GM12878 (cell line): ENCODE measurements at regions of chr19 and their contacts with region 1.

Region 1: DNA sequence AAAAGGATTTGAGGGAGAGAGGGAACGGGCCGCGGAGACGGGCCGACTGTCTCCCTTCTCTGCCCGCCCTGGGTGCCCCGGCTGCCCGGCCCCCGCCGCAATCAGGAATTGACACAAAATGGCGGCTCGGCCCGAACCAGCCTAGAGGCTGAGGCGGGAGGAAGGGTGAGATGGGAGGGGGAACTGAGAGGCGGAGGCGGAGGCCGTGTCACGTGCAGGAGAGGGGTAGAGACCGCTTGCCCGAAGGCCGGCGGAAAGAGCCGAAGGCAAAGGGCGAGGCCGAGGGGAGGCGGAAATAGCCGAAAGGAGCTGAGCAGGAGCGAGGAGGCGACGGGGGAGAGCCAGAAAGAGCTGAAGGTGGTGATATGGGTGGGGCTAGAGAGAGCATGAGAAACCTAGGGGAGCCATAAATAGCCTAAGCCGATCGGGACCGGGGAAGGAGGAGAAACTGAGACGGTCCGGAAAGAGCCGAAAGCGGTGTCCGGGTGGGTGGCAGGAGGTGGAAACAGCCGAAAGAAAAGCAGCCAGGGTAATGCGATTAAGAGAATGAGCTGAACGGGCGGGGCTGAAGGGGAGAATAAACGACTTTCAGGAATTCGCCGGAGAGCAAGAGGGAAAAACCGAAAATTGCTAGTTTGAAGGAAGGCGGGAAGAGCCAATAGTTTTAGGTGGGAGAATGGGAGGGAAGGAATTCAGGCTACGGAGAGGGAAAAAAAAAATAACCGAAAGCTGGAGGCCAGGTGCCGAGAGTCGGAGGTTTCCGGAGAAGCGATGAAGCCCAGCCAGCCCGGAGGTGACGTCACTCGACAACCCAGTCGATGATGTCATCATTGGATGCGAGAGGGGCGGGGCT is at the start of gene ZC3H4:
- DNase-seq: peak; percentile 100
- ATAC-seq: peak; percentile 87
- H3K4me3 ChIP-seq: peak within 1 kb of the TSS; percentile 98
- H3K27ac ChIP-seq: peak within 1 kb of the TSS; percentile 99
- H3K4me1 ChIP-seq: peaks cover 7% of the 10 kb centered on the region
- H3K27me3 ChIP-seq: no peaks in the 10 kb centered on the region
- CTCF ChIP-seq: no peak
- EP300 ChIP-seq: 0 out of 4 replicates have a peak, but pooled peaks of 1 of the 2 experiments have one; percentile 26
- POLR2A ChIP-seq: peak; percentile 90
- RAD21 ChIP-seq: no peak
- polyA plus RNA-seq, gene ZC3H4: 5.8 to 9.3 TPM

Region 2: DNA sequence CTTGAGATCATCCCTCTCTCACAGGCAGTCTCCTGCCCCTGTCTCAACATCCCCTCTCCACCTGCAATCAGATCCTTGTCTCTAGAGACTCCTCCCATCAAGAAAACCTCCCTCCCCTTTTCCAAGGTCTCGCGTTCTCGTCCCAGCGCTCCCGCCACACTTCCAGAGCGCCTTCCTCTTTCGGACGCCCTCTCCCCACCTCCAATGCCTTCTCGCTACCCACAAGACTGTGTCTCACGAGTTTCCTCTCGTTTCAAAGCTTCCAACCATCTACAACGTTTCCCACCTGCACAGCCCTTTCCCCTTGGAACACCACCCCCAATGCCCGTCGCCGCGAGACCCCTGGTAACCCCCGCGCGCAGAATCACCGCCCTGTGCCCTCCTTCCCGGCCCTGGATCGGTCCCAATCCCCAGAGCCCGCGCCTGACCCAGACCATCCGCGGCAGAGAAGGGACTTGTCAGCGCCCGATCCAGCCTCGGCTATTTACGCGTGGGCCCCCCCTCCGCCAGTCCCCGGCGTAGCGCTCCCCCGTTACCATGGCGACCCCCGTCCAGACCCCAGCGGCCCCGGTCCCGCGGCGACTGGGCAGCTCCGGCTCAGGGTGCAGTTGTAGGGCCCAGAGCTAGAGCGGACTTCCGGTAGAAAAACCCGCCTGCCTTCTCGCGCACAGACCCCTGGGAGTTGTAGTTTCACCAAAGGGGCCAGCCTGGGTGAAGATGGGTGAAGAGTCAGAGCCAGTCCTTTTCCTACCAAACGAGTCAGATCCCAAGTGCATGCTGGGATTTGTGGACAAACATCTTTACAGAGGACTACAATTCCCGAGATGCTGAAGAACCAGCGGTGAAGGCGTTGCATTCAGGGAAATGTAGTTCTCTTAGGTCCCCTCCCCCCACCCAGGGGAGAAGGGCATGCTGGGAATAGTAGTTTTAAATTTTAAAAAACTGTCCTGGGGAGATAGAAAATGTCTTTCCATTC is 262.7 kb before region 1 on chr19 and contains the start of gene AP2S1:
- CTCF ChIA-PET with region 1: no interaction called
- POLR2A ChIA-PET with region 1: no interaction called
- RAD21 ChIA-PET with region 1: no interaction called
- SMC1A ChIA-PET with region 1: no interaction called
- in situ Hi-C with region 1: no loop called
- intact Hi-C with region 1: loop called (anchors 10 kb)
- DNase-seq: peak; percentile 98
- ATAC-seq: peak; percentile 99
- H3K4me3 ChIP-seq: peak within 1 kb of the TSS; percentile 99
- H3K27ac ChIP-seq: peak within 1 kb of the TSS; percentile 56
- H3K4me1 ChIP-seq: peaks cover 3% of the 10 kb centered on the region; the same call in 1 of the 2 replicates
- H3K27me3 ChIP-seq: no peaks in the 10 kb centered on the region
- CTCF ChIP-seq: no peak
- EP300 ChIP-seq: 0 out of 4 replicates have a peak, but pooled peaks of 1 of the 2 experiments have one; percentile 25
- POLR2A ChIP-seq: peak; percentile 93
- RAD21 ChIP-seq: no peak
- polyA plus RNA-seq, gene AP2S1: 10.8 to 46.6 TPM

Region 3: GRCh38 chr19:47047763-47048405 is 65.3 kb before region 1 on chr19:
- CTCF ChIA-PET with region 1: interaction called, 4 read pairs
- POLR2A ChIA-PET with region 1: interaction called, 7 read pairs
- RAD21 ChIA-PET with region 1: interaction called, 3 read pairs
- SMC1A ChIA-PET with region 1: interaction called, 6 read pairs
- in situ Hi-C with region 1: no loop called
- intact Hi-C with region 1: loop called (anchors 1 kb)
- DNase-seq: peak; percentile 64
- ATAC-seq: peak; percentile 89
- H3K4me3 ChIP-seq: peak overlapping the region; percentile 92
- H3K27ac ChIP-seq: peak overlapping the region; percentile 48; the same call in 1 of the 2 replicates
- H3K4me1 ChIP-seq: 0 out of 2 replicates have a peak, but pooled peaks cover 5% of the 10 kb centered on the region
- H3K27me3 ChIP-seq: no peaks in the 10 kb centered on the region
- CTCF ChIP-seq: no peak
- EP300 ChIP-seq: no peak
- POLR2A ChIP-seq: 0 out of 2 replicates have a peak, but pooled peaks have one; percentile 43
- RAD21 ChIP-seq: no peak

Region 4: GRCh38 chr19:47130591-47131227 is 17.5 kb after region 1 on chr19 and contains the start of gene SAE1:
- CTCF ChIA-PET with region 1: interaction called, 17 read pairs
- POLR2A ChIA-PET with region 1: interaction called, 45 read pairs
- RAD21 ChIA-PET with region 1: interaction called, 13 read pairs
- SMC1A ChIA-PET with region 1: interaction called, 26 read pairs
- in situ Hi-C with region 1: no loop called
- intact Hi-C with region 1: no loop called
- DNase-seq: peak; percentile 95
- ATAC-seq: peak; percentile 92
- H3K4me3 ChIP-seq: peak within 1 kb of the TSS; percentile 94
- H3K27ac ChIP-seq: peak within 1 kb of the TSS; percentile 90
- H3K4me1 ChIP-seq: peaks cover 3% of the 10 kb centered on the region; the same call in 1 of the 2 replicates
- H3K27me3 ChIP-seq: no peaks in the 10 kb centered on the region
- CTCF ChIP-seq: peak; percentile 53 to 81 (median 56); a peak in 5 of 6 replicates
- EP300 ChIP-seq: no peak
- POLR2A ChIP-seq: peak; percentile 94
- RAD21 ChIP-seq: no peak; the same call in 1 of the 2 replicates
- polyA plus RNA-seq, gene SAE1: 62.0 to 90.0 TPM

Region 5: DNA sequence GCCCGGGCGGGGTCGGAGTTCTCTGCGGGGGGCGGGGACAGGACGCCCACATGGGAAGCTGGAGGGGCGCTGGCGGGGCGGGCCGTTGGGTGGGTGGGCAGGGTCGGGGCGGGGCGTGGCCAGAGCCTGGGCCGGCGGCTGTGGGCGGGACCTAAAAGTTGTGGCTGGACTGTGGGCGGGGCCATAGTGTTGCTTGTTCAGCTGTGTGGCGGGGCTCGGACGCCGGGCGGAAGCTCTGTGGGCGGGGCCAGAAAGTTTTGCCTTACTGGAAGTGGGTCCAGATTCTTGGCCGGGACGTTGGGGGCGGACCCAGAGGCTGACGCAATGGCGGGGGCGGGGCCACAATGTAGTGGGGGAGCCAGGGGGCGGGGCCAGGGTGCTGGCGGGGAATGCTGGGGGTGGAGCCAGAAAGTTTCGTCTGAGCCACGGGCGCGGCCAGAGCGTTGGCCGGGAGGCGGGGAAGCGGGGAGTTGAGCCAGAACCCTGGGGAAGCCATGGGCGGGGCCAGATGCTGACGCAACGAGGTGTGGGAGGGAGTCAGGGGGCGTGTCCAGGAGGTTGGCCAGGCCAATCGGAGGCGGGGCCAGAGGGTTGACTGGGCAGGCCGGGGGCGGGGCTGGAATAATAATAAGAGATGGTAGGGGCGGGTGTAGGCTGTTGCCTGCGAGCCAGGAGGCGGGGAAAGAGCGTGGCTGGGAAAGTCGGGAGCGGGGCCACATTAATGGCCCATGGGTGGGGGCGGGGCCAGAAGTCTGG is 143.6 kb after region 1 on chr19:
- CTCF ChIA-PET with region 1: no interaction called
- POLR2A ChIA-PET with region 1: interaction called, 3 read pairs
- RAD21 ChIA-PET with region 1: interaction called, 11 read pairs
- SMC1A ChIA-PET with region 1: no interaction called
- in situ Hi-C with region 1: no loop called
- intact Hi-C with region 1: no loop called
- DNase-seq: peak; percentile 92
- ATAC-seq: peak; percentile 91
- H3K4me3 ChIP-seq: peak overlapping the region; percentile 93; the same call in 1 of the 2 replicates
- H3K27ac ChIP-seq: peak overlapping the region; percentile 86
- H3K4me1 ChIP-seq: peaks cover 8% of the 10 kb centered on the region
- H3K27me3 ChIP-seq: no peaks in the 10 kb centered on the region
- CTCF ChIP-seq: no peak
- EP300 ChIP-seq: no peak
- POLR2A ChIP-seq: peak; percentile 10; the same call in 1 of the 2 replicates
- RAD21 ChIP-seq: no peak